ENCODE measurements at regions of chr3 and their contacts with region 1.

Region 1: GRCh38 chr3:113136071-113136470 is 75.3 kb upstream of the BOC start:
- DNase-seq: no peak
- H3K4me3 ChIP-seq: no peak overlapping the region
- H3K27ac ChIP-seq: no peak overlapping the region
- H3K4me1 ChIP-seq: no peaks in the 10 kb centered on the region
- H3K27me3 ChIP-seq: no peaks in the 10 kb centered on the region
- CTCF ChIP-seq: peak; percentile 47 to 71

Region 2: GRCh38 chr3:113291572-113291971 is 155.5 kb after region 1 on chr3:
- intact Hi-C with region 1: loop called (anchors 5 kb)
- DNase-seq: no peak
- H3K4me3 ChIP-seq: no peak overlapping the region
- H3K27ac ChIP-seq: no peak overlapping the region
- H3K4me1 ChIP-seq: peaks cover 0 to 10% (median 1%) of the 10 kb centered on the region in 4 donors
- H3K27me3 ChIP-seq: no peaks in the 10 kb centered on the region
- CTCF ChIP-seq: no peak